Activated B cell treated with CpG ODN at 0.5 μM for 24 hours (primary cell): ENCODE measurements at regions of chr6 and their contacts with region 1.

Region 1: DNA sequence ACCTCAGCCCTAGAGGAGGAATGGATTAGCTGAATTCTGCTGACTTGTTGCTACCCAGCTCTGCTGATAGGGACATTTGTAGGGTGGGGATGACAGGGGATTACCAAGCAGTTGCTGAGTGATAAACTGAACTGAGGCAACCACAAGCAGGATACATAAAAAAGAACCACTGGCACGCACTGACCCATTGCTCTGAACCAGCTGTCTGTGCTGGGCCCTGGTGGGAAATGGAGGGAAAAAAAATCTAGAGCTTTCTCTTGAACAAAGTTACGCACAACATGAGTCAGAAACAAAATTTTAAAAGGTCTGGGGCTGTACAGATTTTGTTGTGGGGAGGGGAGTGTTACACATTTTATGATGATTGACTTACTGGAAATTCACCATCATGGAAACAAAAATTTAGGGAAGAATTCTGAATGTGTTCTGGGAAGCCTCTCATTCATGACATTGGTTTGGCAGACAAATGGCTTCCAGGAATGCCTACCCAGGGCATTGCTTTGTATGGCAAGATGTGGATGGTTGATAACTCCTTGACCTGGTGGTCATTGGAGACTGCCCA is 37.7 kb downstream of the FOXO3 start:
- DNase-seq: no peak
- ATAC-seq: peak; percentile 77
- H3K4me3 Mint-ChIP-seq: no peak overlapping the region
- H3K27ac Mint-ChIP-seq: peak overlapping the region; percentile 54
- H3K4me1 Mint-ChIP-seq: peaks cover 33% of the 10 kb centered on the region
- H3K27me3 Mint-ChIP-seq: no peaks in the 10 kb centered on the region
- CTCF ChIP-seq: no peak

Region 2: GRCh38 chr6:108619431-108620197 is 21.2 kb after region 1 on chr6:
- CTCF ChIA-PET with region 1: no interaction called
- POLR2A ChIA-PET with region 1: interaction called, 3 read pairs
- intact Hi-C with region 1: loop called (anchors 2 kb)
- DNase-seq: no peak
- ATAC-seq: no peak
- H3K4me3 Mint-ChIP-seq: no peak overlapping the region
- H3K27ac Mint-ChIP-seq: no peak overlapping the region
- H3K4me1 Mint-ChIP-seq: peaks cover 41% of the 10 kb centered on the region
- H3K27me3 Mint-ChIP-seq: no peaks in the 10 kb centered on the region
- CTCF ChIP-seq: no peak

Region 3: GRCh38 chr6:108771421-108771820 is 173.0 kb after region 1 on chr6:
- CTCF ChIA-PET with region 1: no interaction called
- POLR2A ChIA-PET with region 1: no interaction called
- intact Hi-C with region 1: no loop called
- DNase-seq: no peak
- ATAC-seq: no peak
- H3K4me3 Mint-ChIP-seq: no peak overlapping the region
- H3K27ac Mint-ChIP-seq: no peak overlapping the region
- H3K4me1 Mint-ChIP-seq: no peaks in the 10 kb centered on the region
- H3K27me3 Mint-ChIP-seq: peaks cover 11% of the 10 kb centered on the region
- CTCF ChIP-seq: no peak

Region 4: GRCh38 chr6:110331816-110332215 is 1733.4 kb after region 1 on chr6:
- CTCF ChIA-PET with region 1: no interaction called
- POLR2A ChIA-PET with region 1: interaction called, 12 read pairs
- intact Hi-C with region 1: no loop called
- DNase-seq: no peak
- ATAC-seq: no peak
- H3K4me3 Mint-ChIP-seq: no peak overlapping the region
- H3K27ac Mint-ChIP-seq: no peak overlapping the region
- H3K4me1 Mint-ChIP-seq: no peaks in the 10 kb centered on the region
- H3K27me3 Mint-ChIP-seq: peaks cover 4% of the 10 kb centered on the region
- CTCF ChIP-seq: no peak